CD14-positive monocyte (primary cell): ENCODE measurements at regions of chr18 and their contacts with region 1.

Region 1: DNA sequence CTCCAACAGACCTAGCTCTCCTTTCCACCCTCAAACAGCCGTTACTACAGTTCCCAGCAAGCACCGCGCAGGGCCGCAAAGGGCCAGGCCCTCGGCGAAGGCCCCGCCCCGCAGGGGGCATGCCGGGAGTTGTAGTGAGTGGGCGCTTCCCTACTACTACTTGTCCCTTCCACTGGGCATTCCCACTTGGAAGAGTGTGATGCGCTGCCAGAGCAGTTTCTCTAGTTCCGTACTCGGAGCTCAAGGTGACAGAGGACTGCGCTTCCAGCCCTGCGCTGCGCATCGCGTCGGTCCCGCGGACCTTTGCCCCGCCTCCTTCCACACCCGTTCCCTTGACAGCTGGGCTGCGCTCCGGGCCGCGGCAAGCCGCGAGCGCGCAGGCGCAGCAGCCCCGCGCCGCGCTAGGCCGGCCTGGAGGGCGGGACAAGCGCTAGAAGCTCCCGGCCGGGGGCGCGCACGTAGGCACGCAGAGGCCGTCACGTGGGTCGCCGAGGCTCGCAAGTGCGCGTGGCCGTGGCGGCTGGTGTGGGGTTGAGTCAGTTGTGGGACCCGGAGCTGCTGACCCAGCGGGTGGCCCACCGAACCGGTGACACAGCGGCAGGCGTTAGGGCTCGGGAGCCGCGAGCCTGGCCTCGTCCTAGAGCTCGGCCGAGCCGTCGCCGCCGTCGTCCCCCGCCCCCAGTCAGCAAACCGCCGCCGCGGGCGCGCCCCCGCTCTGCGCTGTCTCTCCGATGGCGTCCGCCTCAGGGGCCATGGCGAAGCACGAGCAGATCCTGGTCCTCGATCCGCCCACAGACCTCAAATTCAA is at the start of gene VAPA:
- DNase-seq: peak; percentile 95 to 99 (median 97)
- H3K4me3 ChIP-seq: peak within 1 kb of the TSS; percentile 87 to 98 (median 95)
- H3K4me3 Mint-ChIP-seq: peak within 1 kb of the TSS; percentile 83 to 95
- H3K27ac ChIP-seq: peak within 1 kb of the TSS; percentile 80 to 97
- H3K27ac Mint-ChIP-seq: peak within 1 kb of the TSS; percentile 91 to 98 (median 97)
- H3K4me1 ChIP-seq: peaks cover 36 to 62% of the 10 kb centered on the region in 2 donors
- H3K4me1 Mint-ChIP-seq: peaks cover 41% of the 10 kb centered on the region
- H3K27me3 ChIP-seq: no peaks in the 10 kb centered on the region
- H3K27me3 Mint-ChIP-seq: no peaks in the 10 kb centered on the region
- CTCF ChIP-seq: no peak
- polyA plus RNA-seq, gene VAPA: 106 to 393 (median 334) TPM

Region 2: GRCh38 chr18:9849407-9850281 is 64.1 kb before region 1 on chr18:
- intact Hi-C with region 1: loop called (anchors 5 to 10 kb)
- DNase-seq: peak; percentile 83 to 86 (median 85)
- H3K4me3 ChIP-seq: peak overlapping the region in 1 of 3 experiments; percentile 29
- H3K4me3 Mint-ChIP-seq: peak overlapping the region; percentile 68 to 81
- H3K27ac ChIP-seq: peak overlapping the region; percentile 80 to 88
- H3K27ac Mint-ChIP-seq: peak overlapping the region; percentile 94 to 98 (median 97)
- H3K4me1 ChIP-seq: peaks cover 39 to 45% of the 10 kb centered on the region in 2 donors
- H3K4me1 Mint-ChIP-seq: peaks cover 61% of the 10 kb centered on the region
- H3K27me3 ChIP-seq: no peaks in the 10 kb centered on the region
- H3K27me3 Mint-ChIP-seq: peaks cover 0 to 5% (median 0%) of the 10 kb centered on the region in 3 donors
- CTCF ChIP-seq: no peak